ENCODE measurements at regions of chr4 and their contacts with region 1.

Region 1: DNA sequence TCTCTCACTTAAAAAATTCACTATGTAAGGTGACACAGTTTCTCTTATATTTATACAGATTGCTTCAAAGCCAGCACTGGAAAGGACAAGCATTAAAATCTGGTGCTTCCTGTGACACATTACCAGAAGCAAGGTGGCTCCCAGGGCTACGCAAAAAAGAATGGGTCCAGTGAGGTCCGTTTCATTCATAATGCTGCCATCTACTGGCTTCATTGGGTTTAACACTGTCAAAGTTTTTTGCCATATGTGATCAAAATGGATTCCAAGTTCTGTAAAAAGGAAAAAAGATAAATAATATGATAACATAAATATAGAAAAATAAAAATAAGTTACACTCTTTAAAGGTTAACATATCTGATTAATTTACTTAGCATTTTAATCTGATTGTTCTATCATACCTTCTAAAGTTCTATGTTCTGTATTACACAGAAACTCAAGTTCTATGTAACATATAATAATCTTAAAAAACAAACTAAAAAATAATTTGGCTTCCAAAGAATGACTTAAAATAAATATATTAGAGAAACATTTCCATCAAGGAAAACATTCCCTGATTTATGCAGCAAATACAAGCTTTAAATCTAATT is 22.1 kb downstream of the YIPF7 start:
- DNase-seq: peak; percentile 39 to 55 (median 46)
- ATAC-seq: peak; percentile 88
- H3K4me3 ChIP-seq: no peak overlapping the region
- H3K27ac ChIP-seq: no peak overlapping the region
- H3K4me1 ChIP-seq: no peaks in the 10 kb centered on the region
- H3K27me3 ChIP-seq: no peaks in the 10 kb centered on the region
- CTCF ChIP-seq: peak; percentile 44 to 70 (median 61); a peak in 5 of 6 replicates
- EP300 ChIP-seq: no peak
- POLR2A ChIP-seq: no peak
- RAD21 ChIP-seq: peak; percentile 30 to 60

Region 2: DNA sequence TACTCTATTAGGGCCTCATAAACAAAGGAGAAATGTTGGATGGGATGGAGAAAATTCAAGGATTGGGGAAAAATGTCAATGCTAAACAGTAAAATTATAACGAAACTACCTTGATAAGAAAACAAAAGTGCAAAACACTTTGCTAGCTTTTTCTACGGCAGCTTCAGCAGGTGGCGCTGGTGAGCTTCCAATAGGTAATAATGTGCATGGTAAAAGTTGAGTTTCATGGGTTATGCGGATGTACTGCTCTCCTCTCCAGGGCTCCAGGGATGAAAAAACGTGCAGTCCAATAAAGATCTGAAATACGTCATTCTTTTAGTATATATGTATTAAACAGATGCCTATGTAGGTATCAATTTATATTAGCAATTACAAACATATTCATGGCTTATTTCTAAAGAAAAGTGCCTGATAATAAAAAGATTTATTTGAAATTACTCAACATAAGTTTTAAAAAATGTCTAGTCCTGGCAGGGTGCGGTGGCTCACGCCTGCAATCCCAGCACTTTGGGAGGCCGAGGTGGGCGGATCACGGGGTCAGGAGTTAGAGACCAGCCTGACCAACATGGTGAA is 1497.3 kb before region 1 on chr4:
- CTCF ChIA-PET with region 1: no interaction called
- POLR2A ChIA-PET with region 1: no interaction called
- in situ Hi-C with region 1: no loop called
- intact Hi-C with region 1: loop called (anchors 1 kb)
- DNase-seq: peak; percentile 12 to 54 (median 26)
- ATAC-seq: no peak; the same call in 2 of the 3 replicates
- H3K4me3 ChIP-seq: no peak overlapping the region
- H3K27ac ChIP-seq: no peak overlapping the region
- H3K4me1 ChIP-seq: no peaks in the 10 kb centered on the region
- H3K27me3 ChIP-seq: no peaks in the 10 kb centered on the region
- CTCF ChIP-seq: peak; percentile 42 to 65 (median 64); a peak in 5 of 6 replicates
- EP300 ChIP-seq: no peak
- POLR2A ChIP-seq: no peak
- RAD21 ChIP-seq: peak; percentile 54 to 68

Region 3: DNA sequence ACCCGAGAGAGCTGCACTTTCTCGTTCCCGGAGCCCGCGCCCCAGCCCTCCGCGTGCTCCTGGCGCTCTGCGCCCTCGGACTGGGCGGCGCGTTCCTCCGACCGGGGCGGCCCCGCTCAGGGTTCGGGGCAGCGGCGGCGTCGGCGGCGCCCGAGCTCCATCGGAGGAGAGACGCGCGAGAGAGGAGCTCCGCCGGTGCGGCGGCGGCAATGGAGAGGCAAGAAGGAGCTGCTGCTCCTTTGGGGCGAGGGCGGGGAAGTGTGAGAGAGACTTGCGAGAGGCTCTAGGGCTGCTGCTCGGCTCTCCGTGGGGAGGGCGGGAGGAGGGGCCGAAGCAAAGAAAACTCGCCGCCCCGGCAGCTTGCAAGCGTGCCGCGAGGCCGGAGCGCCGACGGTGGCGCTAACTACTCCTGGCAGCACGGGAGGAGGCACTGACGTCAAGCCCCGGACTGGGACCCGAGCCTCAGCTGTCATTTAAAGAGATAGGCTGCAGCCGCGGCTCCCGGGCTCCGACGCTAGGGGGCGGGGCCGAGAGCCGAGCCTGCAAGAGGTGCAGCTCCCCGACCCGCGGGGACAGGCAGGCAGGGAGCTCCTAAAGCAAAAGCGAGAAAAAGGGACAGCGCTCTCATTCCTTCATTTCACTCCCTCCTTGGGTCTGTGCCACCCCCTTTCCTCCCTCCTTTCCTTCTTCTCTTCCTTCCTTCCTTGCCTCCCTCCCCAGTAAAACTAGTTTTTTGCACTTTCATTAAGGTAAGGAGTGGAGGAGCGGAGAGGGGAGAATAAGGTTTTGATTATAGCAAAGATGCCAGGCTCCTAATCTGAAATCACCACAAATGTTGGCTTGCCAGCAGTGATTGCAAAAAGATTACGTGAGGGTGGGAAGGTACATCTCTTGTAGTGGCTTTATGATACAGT is 180.6 kb before region 1 on chr4 and contains the start of gene KCTD8:
- CTCF ChIA-PET with region 1: no interaction called
- POLR2A ChIA-PET with region 1: no interaction called
- in situ Hi-C with region 1: no loop called
- intact Hi-C with region 1: loop called (anchors 5 kb)
- DNase-seq: peak; percentile 37 to 46 (median 42)
- ATAC-seq: peak; percentile 85
- H3K4me3 ChIP-seq: no peak within 1 kb of the TSS
- H3K27ac ChIP-seq: no peak within 1 kb of the TSS
- H3K4me1 ChIP-seq: no peaks in the 10 kb centered on the region; a peak in 1 of 5 replicates
- H3K27me3 ChIP-seq: no peaks in the 10 kb centered on the region
- CTCF ChIP-seq: peak in 2 of 3 experiments; percentile 34 to 39; a peak in 2 of 6 replicates
- EP300 ChIP-seq: no peak
- POLR2A ChIP-seq: no peak
- RAD21 ChIP-seq: no peak
- polyA plus RNA-seq, gene KCTD8: not detected

Measured in K562 (cell line).